MCF 10A (cell line): ENCODE measurements at regions of chr7 and their contacts with region 1.

Region 1: GRCh38 chr7:24381894-24382505 is 98.0 kb downstream of the NPY start:
- DNase-seq: peak; percentile 40
- H3K4me3 Mint-ChIP-seq: no peak overlapping the region
- H3K27ac Mint-ChIP-seq: no peak overlapping the region
- H3K4me1 Mint-ChIP-seq: peaks cover 22% of the 10 kb centered on the region
- H3K27me3 Mint-ChIP-seq: no peaks in the 10 kb centered on the region
- CTCF ChIP-seq: peak; percentile 60

Region 2: DNA sequence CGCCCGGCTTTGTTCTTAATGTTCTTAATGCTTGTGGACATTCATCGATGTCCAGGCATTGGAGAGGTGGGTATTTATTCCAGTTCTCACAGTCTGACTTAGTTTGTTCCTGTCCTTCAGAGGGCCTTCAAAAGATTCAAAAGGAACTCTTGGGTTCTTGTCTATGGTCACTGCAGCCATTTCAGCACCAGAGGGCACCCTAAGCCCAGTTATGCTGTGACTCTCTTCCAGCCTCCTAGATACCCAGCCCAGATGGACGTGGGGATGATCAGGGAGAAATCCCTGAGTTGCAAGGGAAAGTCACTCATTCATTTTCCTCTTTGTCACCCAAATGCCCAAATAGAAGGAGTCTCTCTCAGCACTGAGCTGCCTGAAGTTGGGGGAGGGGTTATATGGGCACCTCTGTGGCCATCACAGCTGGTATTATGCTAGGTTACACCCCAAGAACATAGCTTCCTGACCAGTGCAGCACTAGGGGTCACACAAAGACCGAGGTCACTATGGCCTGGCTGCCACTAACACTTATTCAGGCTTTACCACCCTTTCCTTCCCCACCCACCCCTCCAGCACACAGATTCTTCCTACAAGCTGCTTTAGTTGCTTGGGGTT is 811.3 kb before region 1 on chr7:
- CTCF ChIA-PET with region 1: interaction called, 4 read pairs
- POLR2A ChIA-PET with region 1: no interaction called
- intact Hi-C with region 1: loop called (anchors 5 kb)
- DNase-seq: peak; percentile 85
- H3K4me3 Mint-ChIP-seq: no peak overlapping the region
- H3K27ac Mint-ChIP-seq: no peak overlapping the region
- H3K4me1 Mint-ChIP-seq: no peaks in the 10 kb centered on the region
- H3K27me3 Mint-ChIP-seq: no peaks in the 10 kb centered on the region
- CTCF ChIP-seq: peak; percentile 90

Region 3: GRCh38 chr7:23863209-23863798 is 518.7 kb before region 1 on chr7:
- CTCF ChIA-PET with region 1: interaction called, 60 read pairs
- POLR2A ChIA-PET with region 1: interaction called, 6 read pairs
- intact Hi-C with region 1: loop called (anchors 1 kb)
- DNase-seq: peak; percentile 50
- H3K4me3 Mint-ChIP-seq: no peak overlapping the region
- H3K27ac Mint-ChIP-seq: no peak overlapping the region
- H3K4me1 Mint-ChIP-seq: peaks cover 13% of the 10 kb centered on the region
- H3K27me3 Mint-ChIP-seq: no peaks in the 10 kb centered on the region
- CTCF ChIP-seq: peak; percentile 80

Region 4: GRCh38 chr7:24197852-24198251 is 184.1 kb before region 1 on chr7:
- CTCF ChIA-PET with region 1: no interaction called
- POLR2A ChIA-PET with region 1: no interaction called
- intact Hi-C with region 1: no loop called
- DNase-seq: no peak
- H3K4me3 Mint-ChIP-seq: no peak overlapping the region
- H3K27ac Mint-ChIP-seq: no peak overlapping the region
- H3K4me1 Mint-ChIP-seq: no peaks in the 10 kb centered on the region
- H3K27me3 Mint-ChIP-seq: no peaks in the 10 kb centered on the region
- CTCF ChIP-seq: no peak

Region 5: GRCh38 chr7:24290004-24290641 is 91.9 kb before region 1 on chr7:
- CTCF ChIA-PET with region 1: interaction called, 26 read pairs
- POLR2A ChIA-PET with region 1: interaction called, 3 read pairs
- intact Hi-C with region 1: loop called (anchors 1 kb)
- DNase-seq: peak; percentile 74
- H3K4me3 Mint-ChIP-seq: no peak overlapping the region
- H3K27ac Mint-ChIP-seq: no peak overlapping the region
- H3K4me1 Mint-ChIP-seq: peaks cover 6% of the 10 kb centered on the region
- H3K27me3 Mint-ChIP-seq: peaks cover 14% of the 10 kb centered on the region
- CTCF ChIP-seq: peak; percentile 64

Region 6: GRCh38 chr7:24392774-24393173 is 10.8 kb after region 1 on chr7:
- CTCF ChIA-PET with region 1: interaction called, 11 read pairs
- POLR2A ChIA-PET with region 1: no interaction called
- intact Hi-C with region 1: no loop called
- DNase-seq: no peak
- H3K4me3 Mint-ChIP-seq: no peak overlapping the region
- H3K27ac Mint-ChIP-seq: no peak overlapping the region
- H3K4me1 Mint-ChIP-seq: no peaks in the 10 kb centered on the region
- H3K27me3 Mint-ChIP-seq: no peaks in the 10 kb centered on the region
- CTCF ChIP-seq: no peak

Region 7: DNA sequence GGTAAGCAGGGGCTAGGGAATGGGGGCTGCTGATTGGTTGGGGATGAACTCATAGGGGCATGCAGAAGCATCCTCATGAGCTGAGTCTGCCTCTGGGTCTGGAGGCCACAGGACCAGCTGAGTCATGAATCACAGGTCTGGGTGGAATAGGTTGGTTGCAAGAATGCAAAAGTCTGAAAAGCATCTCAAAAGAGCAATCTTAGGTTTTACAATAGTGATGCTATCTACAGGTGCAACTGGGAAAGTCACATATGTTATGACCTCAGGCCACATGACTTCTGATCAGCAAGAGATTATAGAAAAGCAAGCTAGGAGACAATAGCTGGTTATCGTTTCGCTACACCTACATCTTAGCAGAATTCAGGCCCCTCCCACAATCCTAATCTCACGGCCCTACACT is 133.9 kb after region 1 on chr7:
- CTCF ChIA-PET with region 1: no interaction called
- POLR2A ChIA-PET with region 1: no interaction called
- intact Hi-C with region 1: no loop called
- DNase-seq: no peak
- H3K4me3 Mint-ChIP-seq: no peak overlapping the region
- H3K27ac Mint-ChIP-seq: no peak overlapping the region
- H3K4me1 Mint-ChIP-seq: no peaks in the 10 kb centered on the region
- H3K27me3 Mint-ChIP-seq: peaks cover 72% of the 10 kb centered on the region
- CTCF ChIP-seq: no peak